GM10248 (cell line): ENCODE measurements at regions of chr2 and their contacts with region 1.

Region 1: GRCh38 chr2:227793148-227793712 is 20.4 kb upstream of the CCL20 start:
- DNase-seq: no peak
- CTCF ChIP-seq: no peak

Region 2: DNA sequence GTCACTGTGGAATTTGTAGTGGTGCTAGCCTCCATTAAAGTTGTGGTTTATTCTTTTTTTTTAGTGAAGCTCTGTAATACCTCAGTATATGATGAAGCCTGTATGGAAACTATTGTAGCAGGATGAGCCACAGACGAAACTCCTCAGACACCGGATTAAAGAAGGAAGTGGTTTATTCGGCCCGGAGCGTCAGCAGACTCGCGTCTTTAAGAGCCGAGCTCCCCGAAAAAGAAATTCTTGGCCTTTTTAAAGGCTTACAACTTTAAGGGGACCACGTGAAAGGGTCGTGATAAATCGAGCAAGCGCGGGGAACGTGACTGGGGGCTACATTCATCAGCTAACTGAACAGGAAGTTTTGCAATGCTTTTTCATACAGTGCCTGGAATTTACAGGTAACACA is 12.3 kb after region 1 on chr2:
- CTCF ChIA-PET with region 1: interaction called, 12 read pairs
- POLR2A ChIA-PET with region 1: no interaction called
- DNase-seq: no peak
- CTCF ChIP-seq: no peak